ENCODE measurements at regions of chr17 and their contacts with region 1.

Region 1: GRCh38 chr17:69607162-69607834 is 192.8 kb downstream of the MAP2K6 start:
- DNase-seq: peak; percentile 69
- ATAC-seq: peak; percentile 74
- H3K4me3 Mint-ChIP-seq: no peak overlapping the region
- H3K27ac Mint-ChIP-seq: peak overlapping the region; percentile 25
- H3K4me1 Mint-ChIP-seq: peaks cover 15% of the 10 kb centered on the region
- H3K27me3 Mint-ChIP-seq: peaks cover 3% of the 10 kb centered on the region

Region 2: GRCh38 chr17:70144260-70144846 is 537.1 kb after region 1 on chr17:
- CTCF ChIA-PET with region 1: interaction called, 5 read pairs
- POLR2A ChIA-PET with region 1: no interaction called
- intact Hi-C with region 1: loop called in 1 of 2 experiments (anchors 1 kb)
- DNase-seq: no peak
- ATAC-seq: no peak
- H3K4me3 Mint-ChIP-seq: no peak overlapping the region
- H3K27ac Mint-ChIP-seq: no peak overlapping the region
- H3K4me1 Mint-ChIP-seq: no peaks in the 10 kb centered on the region
- H3K27me3 Mint-ChIP-seq: peaks cover 7% of the 10 kb centered on the region

Region 3: GRCh38 chr17:70552230-70552981 is 945.1 kb after region 1 on chr17:
- CTCF ChIA-PET with region 1: interaction called, 13 read pairs
- POLR2A ChIA-PET with region 1: no interaction called
- intact Hi-C with region 1: loop called (anchors 5 kb)
- DNase-seq: no peak
- ATAC-seq: no peak
- H3K4me3 Mint-ChIP-seq: no peak overlapping the region
- H3K27ac Mint-ChIP-seq: no peak overlapping the region
- H3K4me1 Mint-ChIP-seq: no peaks in the 10 kb centered on the region
- H3K27me3 Mint-ChIP-seq: no peaks in the 10 kb centered on the region